Sigmoid colon (tissue), 7 donors: ENCODE measurements at regions of chr4 and their contacts with region 1.

Region 1: DNA sequence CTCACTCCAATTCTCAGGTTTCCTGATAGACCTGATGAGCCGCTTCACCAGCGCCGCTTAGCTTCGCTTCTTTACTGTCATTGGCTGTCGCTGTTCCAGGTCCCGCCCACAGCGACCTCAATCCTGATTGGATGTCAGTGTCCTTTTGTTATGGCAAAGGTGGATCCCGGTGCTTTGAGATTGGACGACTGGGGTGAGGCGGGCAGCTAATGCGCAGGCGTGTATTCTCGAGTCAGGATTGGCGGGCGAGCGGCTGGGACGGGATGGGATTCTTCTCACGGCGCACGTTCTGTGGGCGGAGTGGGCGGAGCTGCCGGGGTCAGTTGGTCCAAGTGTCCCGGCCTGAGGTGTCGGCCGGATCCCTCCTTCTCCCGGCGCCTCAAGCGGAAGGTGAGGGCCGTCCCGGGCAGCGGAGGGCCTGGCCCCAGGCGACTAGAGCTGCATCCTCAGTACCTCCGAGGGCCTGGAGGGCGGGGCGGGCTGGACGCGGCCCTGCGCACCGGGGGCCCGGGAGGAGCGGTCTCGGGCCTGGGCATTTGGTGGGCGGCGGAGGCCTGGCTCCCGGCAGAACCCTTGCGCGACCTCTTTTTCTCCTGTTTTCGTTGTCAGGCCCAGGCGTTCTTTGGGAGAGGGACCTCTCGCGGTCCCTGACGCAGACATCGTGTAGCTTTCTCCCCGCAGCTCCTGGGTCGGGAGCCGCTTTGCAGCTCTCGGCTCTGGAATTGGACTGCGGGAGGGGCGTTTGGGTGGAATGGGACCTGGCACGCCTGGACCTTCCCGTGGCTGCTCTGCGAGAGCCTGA is at the start of gene SCOC:
- DNase-seq: peak; percentile 100
- H3K4me3 ChIP-seq: peak within 1 kb of the TSS; percentile 72 to 93 (median 84)
- H3K27ac ChIP-seq: peak within 1 kb of the TSS; percentile 93 to 97 (median 96)
- H3K4me1 ChIP-seq: peaks cover 0 to 48% (median 28%) of the 10 kb centered on the region in 4 donors
- H3K27me3 ChIP-seq: no peaks in the 10 kb centered on the region
- CTCF ChIP-seq: no peak
- EP300 ChIP-seq: no peak
- POLR2A ChIP-seq: peak; percentile 44 to 67
- total RNA-seq, gene SCOC: 55.9 to 74.2 (median 65.5) TPM

Region 2: GRCh38 chr4:140326395-140326993 is 47.0 kb before region 1 on chr4:
- intact Hi-C with region 1: no loop called
- DNase-seq: no peak
- H3K4me3 ChIP-seq: no peak overlapping the region
- H3K27ac ChIP-seq: no peak overlapping the region
- H3K4me1 ChIP-seq: no peaks in the 10 kb centered on the region
- H3K27me3 ChIP-seq: no peaks in the 10 kb centered on the region
- CTCF ChIP-seq: peak; percentile 61 to 68 (median 64)
- EP300 ChIP-seq: no peak
- POLR2A ChIP-seq: no peak

Region 3: DNA sequence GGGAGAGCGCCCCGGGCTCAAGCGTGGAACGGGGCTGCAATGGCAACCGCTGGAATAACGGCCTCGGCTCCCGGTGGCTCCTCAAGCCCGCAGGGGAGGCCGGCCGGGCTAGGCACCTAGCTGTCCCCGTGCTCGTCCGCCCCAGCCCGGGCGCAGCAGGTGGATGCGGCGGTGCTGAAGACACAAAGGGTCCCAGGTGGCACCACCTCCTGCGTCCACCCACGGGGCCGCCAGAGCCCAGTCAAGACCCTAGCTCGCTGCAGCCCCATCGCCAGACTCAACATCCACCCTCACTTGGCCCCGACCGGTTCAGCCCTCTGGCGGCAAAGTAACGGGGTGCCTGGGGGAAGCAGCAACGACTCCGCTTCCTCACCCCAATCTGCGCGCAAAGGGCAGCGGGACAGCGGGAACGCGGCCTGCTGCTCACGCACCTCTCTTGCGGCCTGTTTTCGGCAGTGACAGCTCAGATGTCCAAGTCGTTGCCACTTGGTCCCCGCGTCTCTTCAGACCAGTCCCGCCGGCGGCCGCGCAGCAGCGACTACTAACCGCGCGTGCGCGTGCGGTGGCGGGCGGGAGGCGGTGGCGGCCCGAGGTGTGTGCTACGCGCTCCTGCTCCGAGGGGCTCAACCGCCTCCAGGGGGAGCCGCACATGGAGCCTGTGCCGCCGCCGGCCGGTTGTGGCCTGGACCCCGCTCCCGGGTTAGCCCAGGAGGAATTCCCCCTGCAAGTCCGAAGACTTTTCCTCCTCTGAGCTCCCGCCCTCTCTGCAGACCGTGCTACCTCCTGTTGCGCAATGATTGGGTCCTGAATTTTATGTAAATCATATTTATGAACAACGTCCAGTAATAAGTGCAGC is 53.8 kb after region 1 on chr4 and contains the start of gene CLGN:
- intact Hi-C with region 1: loop called (anchors 2 kb)
- DNase-seq: peak; percentile 82
- H3K4me3 ChIP-seq: peak within 1 kb of the TSS; percentile 47 to 64 (median 62)
- H3K27ac ChIP-seq: peak within 1 kb of the TSS; percentile 56 to 65 (median 62)
- H3K4me1 ChIP-seq: peaks cover 0 to 17% (median 15%) of the 10 kb centered on the region in 4 donors
- H3K27me3 ChIP-seq: no peaks in the 10 kb centered on the region
- CTCF ChIP-seq: peak in 2 of 4 experiments; percentile 6 to 24
- EP300 ChIP-seq: no peak
- POLR2A ChIP-seq: no peak
- total RNA-seq, gene CLGN: 2.9 to 14.0 (median 3.1) TPM

Region 4: GRCh38 chr4:140523857-140524742 is 150.6 kb after region 1 on chr4 and contains the start of gene ELMOD2:
- intact Hi-C with region 1: loop called (anchors 5 kb)
- DNase-seq: peak; percentile 99
- H3K4me3 ChIP-seq: peak within 1 kb of the TSS; percentile 84 to 95 (median 89)
- H3K27ac ChIP-seq: peak within 1 kb of the TSS; percentile 88 to 92 (median 90)
- H3K4me1 ChIP-seq: peaks cover 0 to 16% (median 13%) of the 10 kb centered on the region in 4 donors
- H3K27me3 ChIP-seq: no peaks in the 10 kb centered on the region
- CTCF ChIP-seq: peak; percentile 73 to 82 (median 78)
- EP300 ChIP-seq: no peak
- POLR2A ChIP-seq: no peak
- total RNA-seq, gene ELMOD2: 11.8 to 20.7 (median 19.6) TPM